ENCODE measurements at regions of chr13 and their contacts with region 1.

Region 1: GRCh38 chr13:100392709-100393641 is 195.6 kb downstream of the GGACT start:
- DNase-seq: peak; percentile 86
- H3K4me3 Mint-ChIP-seq: peak overlapping the region; percentile 70
- H3K27ac Mint-ChIP-seq: peak overlapping the region; percentile 91
- H3K4me1 Mint-ChIP-seq: peaks cover 27% of the 10 kb centered on the region
- H3K27me3 Mint-ChIP-seq: no peaks in the 10 kb centered on the region

Region 2: GRCh38 chr13:99214232-99214631 is 1178.7 kb before region 1 on chr13:
- intact Hi-C with region 1: loop called (anchors 10 kb)
- DNase-seq: peak; percentile 78
- H3K4me3 Mint-ChIP-seq: peak overlapping the region; percentile 83
- H3K27ac Mint-ChIP-seq: peak overlapping the region; percentile 92
- H3K4me1 Mint-ChIP-seq: peaks cover 68% of the 10 kb centered on the region
- H3K27me3 Mint-ChIP-seq: no peaks in the 10 kb centered on the region

Region 3: GRCh38 chr13:99501184-99501847 is 891.7 kb before region 1 on chr13 and contains the start of gene TM9SF2:
- intact Hi-C with region 1: loop called (anchors 5 kb)
- DNase-seq: peak; percentile 99
- H3K4me3 Mint-ChIP-seq: peak within 1 kb of the TSS; percentile 94
- H3K27ac Mint-ChIP-seq: peak within 1 kb of the TSS; percentile 96
- H3K4me1 Mint-ChIP-seq: peaks cover 60% of the 10 kb centered on the region
- H3K27me3 Mint-ChIP-seq: no peaks in the 10 kb centered on the region
- total RNA-seq, gene TM9SF2: 57.8 and 60.2 TPM in 2 replicates

Region 4: DNA sequence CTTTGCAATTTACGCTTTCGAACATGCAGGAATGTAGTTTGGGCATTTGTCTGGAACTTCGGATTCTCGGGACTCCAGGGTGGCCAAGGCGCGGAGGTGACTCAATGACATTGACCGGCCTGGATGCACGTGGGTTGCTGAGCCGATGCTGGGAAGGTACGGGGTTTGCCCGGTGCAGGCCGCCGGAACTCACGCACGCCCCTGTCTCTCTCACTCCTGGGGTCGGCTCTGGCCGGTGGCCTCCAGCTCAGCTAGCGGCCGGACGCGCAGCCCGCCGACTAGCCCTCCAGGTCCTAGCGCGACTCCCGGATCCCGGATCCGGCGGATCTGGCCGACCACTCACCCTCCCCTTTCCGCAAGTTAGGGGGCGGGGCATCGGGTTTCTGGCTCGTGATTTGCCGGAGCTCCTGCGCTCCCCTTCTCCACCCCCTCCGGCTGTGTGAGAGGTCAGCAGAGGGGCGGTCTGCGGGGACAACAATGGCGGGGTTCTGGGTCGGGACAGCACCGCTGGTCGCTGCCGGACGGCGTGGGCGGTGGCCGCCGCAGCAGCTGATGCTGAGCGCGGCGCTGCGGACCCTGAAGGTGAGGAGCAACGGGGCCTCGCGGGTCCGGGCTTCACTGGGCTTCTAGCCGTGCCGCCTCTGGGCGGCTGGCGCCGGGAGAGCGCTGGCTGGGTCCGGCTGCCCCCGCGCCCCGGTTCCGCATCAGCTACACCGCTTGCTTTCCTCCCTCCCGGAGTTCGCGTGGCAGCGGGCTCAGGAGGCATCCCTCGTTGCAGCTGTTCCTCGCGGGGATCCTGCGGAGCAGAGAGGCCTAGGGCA is 304.1 kb before region 1 on chr13 and contains the start of gene PCCA:
- intact Hi-C with region 1: loop called (anchors 5 kb)
- DNase-seq: peak; percentile 95
- H3K4me3 Mint-ChIP-seq: peak within 1 kb of the TSS; percentile 94
- H3K27ac Mint-ChIP-seq: peak within 1 kb of the TSS; percentile 86
- H3K4me1 Mint-ChIP-seq: peaks cover 18% of the 10 kb centered on the region
- H3K27me3 Mint-ChIP-seq: peaks cover 4% of the 10 kb centered on the region
- total RNA-seq, gene PCCA: 5.8 and 6.4 TPM in 2 replicates

Region 5: DNA sequence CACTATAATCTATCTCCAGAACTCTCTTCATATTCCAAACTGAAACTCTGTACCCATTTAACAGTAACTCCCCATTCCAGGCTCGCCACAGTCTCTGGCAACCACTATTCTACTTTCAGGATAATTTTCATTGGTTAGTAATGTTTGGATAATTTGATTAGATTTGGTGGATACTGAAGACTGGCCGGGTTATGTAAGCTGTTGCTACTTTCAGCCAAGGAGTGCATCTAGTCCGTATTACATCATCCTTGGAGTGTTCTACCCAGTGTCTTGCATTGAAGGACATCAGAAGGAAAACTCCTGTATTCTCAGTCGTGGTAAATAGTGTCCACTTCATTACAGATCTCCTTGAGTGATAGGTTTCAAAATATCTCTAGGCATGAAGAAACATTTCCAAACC is 243.6 kb before region 1 on chr13:
- intact Hi-C with region 1: no loop called
- DNase-seq: no peak
- H3K4me3 Mint-ChIP-seq: no peak overlapping the region
- H3K27ac Mint-ChIP-seq: no peak overlapping the region
- H3K4me1 Mint-ChIP-seq: no peaks in the 10 kb centered on the region
- H3K27me3 Mint-ChIP-seq: no peaks in the 10 kb centered on the region

Region 6: DNA sequence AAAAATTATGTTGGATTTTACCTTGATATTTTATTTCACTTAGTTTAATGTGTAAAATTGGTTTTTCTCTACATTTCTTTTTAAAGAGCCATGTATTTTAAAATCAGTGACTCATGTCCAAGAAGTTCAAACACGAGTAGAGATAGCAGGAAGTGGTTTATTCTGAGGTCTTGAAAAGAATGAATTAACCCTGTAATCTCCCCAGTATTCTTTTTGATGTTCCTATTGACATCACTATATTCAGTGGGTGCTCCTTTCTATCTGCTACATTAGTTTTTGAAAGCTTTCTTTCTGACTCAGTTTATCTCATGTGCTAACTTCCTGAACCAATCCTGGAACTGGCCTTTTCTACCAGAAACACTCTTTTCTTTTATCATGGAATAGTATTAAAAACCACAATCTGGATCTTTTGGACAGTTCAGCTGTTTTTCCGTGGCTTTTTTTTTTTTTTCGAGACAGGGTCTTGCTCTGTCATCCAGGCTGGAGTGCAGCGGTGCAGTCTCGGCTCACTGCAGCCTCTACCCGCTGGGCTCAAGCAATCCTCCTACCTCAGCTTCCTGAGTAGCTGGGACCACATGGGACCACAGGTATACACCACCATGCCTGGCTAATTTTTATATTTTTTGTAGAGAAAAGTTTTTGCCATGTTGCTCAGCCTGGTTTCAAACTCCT is 189.1 kb before region 1 on chr13:
- intact Hi-C with region 1: loop called (anchors 5 kb)
- DNase-seq: no peak
- H3K4me3 Mint-ChIP-seq: peak overlapping the region; percentile 56
- H3K27ac Mint-ChIP-seq: peak overlapping the region; percentile 50
- H3K4me1 Mint-ChIP-seq: peaks cover 8% of the 10 kb centered on the region
- H3K27me3 Mint-ChIP-seq: no peaks in the 10 kb centered on the region

Region 7: GRCh38 chr13:100434010-100434763 is 41.2 kb after region 1 on chr13:
- intact Hi-C with region 1: loop called (anchors 1 kb)
- DNase-seq: peak; percentile 68
- H3K4me3 Mint-ChIP-seq: peak overlapping the region; percentile 22
- H3K27ac Mint-ChIP-seq: peak overlapping the region; percentile 26
- H3K4me1 Mint-ChIP-seq: peaks cover 31% of the 10 kb centered on the region
- H3K27me3 Mint-ChIP-seq: no peaks in the 10 kb centered on the region

Region 8: GRCh38 chr13:100447831-100448230 is 54.9 kb after region 1 on chr13:
- intact Hi-C with region 1: no loop called
- DNase-seq: no peak
- H3K4me3 Mint-ChIP-seq: no peak overlapping the region
- H3K27ac Mint-ChIP-seq: no peak overlapping the region
- H3K4me1 Mint-ChIP-seq: peaks cover 5% of the 10 kb centered on the region
- H3K27me3 Mint-ChIP-seq: no peaks in the 10 kb centered on the region

Region 9: DNA sequence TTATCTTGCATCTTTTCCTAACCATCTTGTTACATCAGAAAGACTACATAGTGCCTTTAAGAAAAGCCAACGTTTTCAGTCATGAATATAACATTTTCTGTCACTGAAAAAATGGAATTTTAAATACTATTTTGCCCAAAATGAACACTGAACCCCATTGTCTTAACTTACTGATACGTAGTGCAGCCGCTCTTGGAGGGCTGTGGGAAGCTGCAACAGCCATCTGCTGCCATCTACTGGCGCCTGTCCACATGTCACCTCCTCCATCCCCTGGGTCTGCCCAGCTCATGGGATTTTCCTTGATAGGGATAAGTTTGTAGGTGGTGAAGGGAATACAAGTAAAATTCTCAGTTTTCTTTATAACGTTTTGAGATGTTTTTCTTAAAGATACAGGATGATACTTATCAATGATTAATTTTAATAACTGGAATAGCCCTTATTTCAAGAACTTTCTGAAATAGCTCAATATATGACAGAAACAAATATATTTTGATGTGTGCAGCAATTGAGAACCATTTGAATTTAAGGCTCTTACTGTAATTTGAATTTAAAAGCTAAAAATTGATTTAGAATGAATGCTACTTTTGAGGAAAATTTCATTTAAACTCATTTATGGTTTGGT is 121.9 kb after region 1 on chr13:
- intact Hi-C with region 1: loop called (anchors 2 kb)
- DNase-seq: peak; percentile 91
- H3K4me3 Mint-ChIP-seq: no peak overlapping the region
- H3K27ac Mint-ChIP-seq: no peak overlapping the region
- H3K4me1 Mint-ChIP-seq: peaks cover 14% of the 10 kb centered on the region
- H3K27me3 Mint-ChIP-seq: peaks cover 6% of the 10 kb centered on the region

Measured in activated CD4-positive, alpha-beta T cell treated with anti-CD3 and anti-CD28 coated beads, Interleukin-2, amount 10 ng/mL, durations not matched to agents 24 days and 14 days (primary cell).